ENCODE measurements at regions of chr19 and their contacts with region 1.

Region 1: GRCh38 chr19:3932931-3933810 is at the start of gene NMRK2:
- DNase-seq: no peak
- ATAC-seq: no peak
- H3K4me3 ChIP-seq: no peak within 1 kb of the TSS
- H3K27ac ChIP-seq: no peak within 1 kb of the TSS
- H3K4me1 ChIP-seq: no peaks in the 10 kb centered on the region
- H3K27me3 ChIP-seq: no peaks in the 10 kb centered on the region
- CTCF ChIP-seq: no peak
- total RNA-seq, gene NMRK2: 0.21 TPM

Region 2: GRCh38 chr19:3202346-3202745 is 730.8 kb before region 1 on chr19:
- CTCF ChIA-PET with region 1: no interaction called
- POLR2A ChIA-PET with region 1: interaction called, 10 read pairs
- in situ Hi-C with region 1: no loop called
- intact Hi-C with region 1: no loop called
- DNase-seq: no peak
- ATAC-seq: no peak
- H3K4me3 ChIP-seq: no peak overlapping the region
- H3K27ac ChIP-seq: no peak overlapping the region
- H3K4me1 ChIP-seq: no peaks in the 10 kb centered on the region
- H3K27me3 ChIP-seq: no peaks in the 10 kb centered on the region
- CTCF ChIP-seq: no peak

Region 3: DNA sequence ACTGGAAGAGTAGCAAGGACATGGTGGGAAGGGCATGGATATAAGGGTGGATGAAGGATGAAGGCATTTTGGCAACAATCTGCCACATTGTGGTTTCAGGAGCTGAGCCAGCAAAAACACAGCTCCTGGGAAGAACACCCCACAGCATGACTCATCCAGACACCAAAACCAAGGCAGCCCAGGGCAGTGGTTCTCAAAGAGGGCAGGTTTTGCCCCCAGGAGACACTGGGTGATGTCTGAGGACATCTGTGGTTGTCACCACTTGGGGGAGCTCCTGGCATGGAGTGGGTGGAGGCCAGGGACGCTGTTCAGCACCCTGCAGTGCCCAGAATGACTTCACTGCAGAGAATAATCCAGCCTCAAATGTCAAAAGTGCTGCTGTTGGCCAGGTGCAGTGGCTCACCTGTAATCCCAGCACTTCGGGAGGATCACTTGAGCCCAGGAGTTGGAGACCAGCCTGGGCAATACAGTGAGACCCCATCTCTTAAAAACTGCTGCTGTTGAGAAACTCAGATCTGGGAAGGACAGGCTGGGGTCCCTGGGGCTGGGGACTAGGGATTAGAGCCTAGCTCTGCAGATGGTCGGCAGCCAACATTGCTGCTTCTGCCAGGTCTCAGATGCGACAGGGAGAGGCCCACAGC is 80.4 kb before region 1 on chr19:
- CTCF ChIA-PET with region 1: no interaction called
- POLR2A ChIA-PET with region 1: interaction called, 13 read pairs
- in situ Hi-C with region 1: no loop called
- intact Hi-C with region 1: no loop called
- DNase-seq: no peak
- ATAC-seq: peak; percentile 33; the same call in 1 of the 2 replicates
- H3K4me3 ChIP-seq: no peak overlapping the region
- H3K27ac ChIP-seq: no peak overlapping the region
- H3K4me1 ChIP-seq: no peaks in the 10 kb centered on the region
- H3K27me3 ChIP-seq: no peaks in the 10 kb centered on the region
- CTCF ChIP-seq: no peak

Region 4: GRCh38 chr19:3914199-3914598 is 19.0 kb before region 1 on chr19:
- CTCF ChIA-PET with region 1: no interaction called
- POLR2A ChIA-PET with region 1: no interaction called
- in situ Hi-C with region 1: no loop called
- intact Hi-C with region 1: no loop called
- DNase-seq: no peak
- ATAC-seq: no peak
- H3K4me3 ChIP-seq: no peak overlapping the region
- H3K27ac ChIP-seq: no peak overlapping the region
- H3K4me1 ChIP-seq: no peaks in the 10 kb centered on the region
- H3K27me3 ChIP-seq: no peaks in the 10 kb centered on the region
- CTCF ChIP-seq: no peak

Region 5: GRCh38 chr19:4051175-4052049 is 118.2 kb after region 1 on chr19:
- CTCF ChIA-PET with region 1: no interaction called
- POLR2A ChIA-PET with region 1: interaction called, 12 read pairs
- in situ Hi-C with region 1: no loop called
- intact Hi-C with region 1: no loop called
- DNase-seq: no peak
- ATAC-seq: peak; percentile 31; the same call in 1 of the 2 replicates
- H3K4me3 ChIP-seq: no peak overlapping the region
- H3K27ac ChIP-seq: peak overlapping the region; percentile 63
- H3K4me1 ChIP-seq: peaks cover 21% of the 10 kb centered on the region
- H3K27me3 ChIP-seq: no peaks in the 10 kb centered on the region
- CTCF ChIP-seq: no peak